Cardiac septum (tissue), 1 donor: ENCODE measurements at regions of chr12 and their contacts with region 1.

Region 1: GRCh38 chr12:89971881-89972280 is 263.2 kb upstream of the ATP2B1 start:
- DNase-seq: no peak

Region 2: GRCh38 chr12:89709157-89709994 is 262.5 kb before region 1 on chr12:
- intact Hi-C with region 1: loop called (anchors 10 kb)
- DNase-seq: peak; percentile 99